Endothelial cell of umbilical vein (primary cell): ENCODE measurements at regions of chr4 and their contacts with region 1.

Region 1: DNA sequence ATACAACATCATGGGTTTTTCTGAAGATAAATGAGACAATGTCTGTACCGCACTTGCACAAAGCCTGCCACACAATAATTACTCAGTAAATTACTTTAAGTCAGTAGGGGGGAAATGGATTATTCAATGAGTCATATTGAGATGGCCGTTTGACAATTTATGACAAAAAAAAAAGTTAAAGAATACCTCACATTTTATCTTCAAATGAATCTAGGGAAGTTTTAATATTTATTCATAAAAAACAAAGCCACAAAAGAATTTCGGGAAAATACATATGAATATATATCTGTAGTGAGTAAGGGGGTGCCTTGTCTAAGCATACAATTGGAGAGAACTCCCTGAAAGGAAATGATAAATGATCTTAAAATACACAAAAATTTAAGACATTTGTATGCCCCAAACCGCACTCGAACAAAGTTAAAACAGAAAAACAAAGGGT is 197.0 kb upstream of the SLC7A11 start:
- DNase-seq: peak; percentile 60
- H3K4me3 ChIP-seq: peak overlapping the region in 1 of 3 experiments; percentile 17
- H3K27ac ChIP-seq: peak overlapping the region; percentile 70
- H3K4me1 ChIP-seq: peaks cover 19% of the 10 kb centered on the region
- H3K27me3 ChIP-seq: no peaks in the 10 kb centered on the region
- CTCF ChIP-seq: no peak
- POLR2A ChIP-seq: no peak

Region 2: DNA sequence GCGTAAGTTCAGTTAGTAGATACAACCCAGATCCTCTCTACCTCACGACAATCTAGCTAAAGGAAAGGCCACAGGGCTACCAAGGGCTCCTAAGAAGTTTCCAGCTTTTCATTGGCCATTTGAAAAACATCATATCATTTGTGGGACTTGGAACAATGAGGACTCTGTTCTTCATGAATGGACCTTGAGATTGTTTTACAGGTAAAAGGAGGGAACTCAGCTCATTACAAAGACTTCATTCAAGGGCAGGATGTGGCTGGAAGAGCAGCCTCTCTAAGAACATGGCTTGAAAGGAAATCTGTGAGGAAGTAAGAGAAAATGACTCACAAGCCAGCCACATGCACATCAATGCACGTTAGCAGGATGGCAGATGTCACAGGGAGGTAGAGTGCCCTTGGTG is 91.1 kb before region 1 on chr4:
- CTCF ChIA-PET with region 1: no interaction called
- POLR2A ChIA-PET with region 1: no interaction called
- dilution Hi-C with region 1: no loop called
- intact Hi-C with region 1: loop called (anchors 5 kb)
- DNase-seq: peak; percentile 23
- H3K4me3 ChIP-seq: no peak overlapping the region
- H3K27ac ChIP-seq: peak overlapping the region; percentile 12
- H3K4me1 ChIP-seq: peaks cover 12% of the 10 kb centered on the region
- H3K27me3 ChIP-seq: no peaks in the 10 kb centered on the region
- CTCF ChIP-seq: no peak
- POLR2A ChIP-seq: no peak

Region 3: DNA sequence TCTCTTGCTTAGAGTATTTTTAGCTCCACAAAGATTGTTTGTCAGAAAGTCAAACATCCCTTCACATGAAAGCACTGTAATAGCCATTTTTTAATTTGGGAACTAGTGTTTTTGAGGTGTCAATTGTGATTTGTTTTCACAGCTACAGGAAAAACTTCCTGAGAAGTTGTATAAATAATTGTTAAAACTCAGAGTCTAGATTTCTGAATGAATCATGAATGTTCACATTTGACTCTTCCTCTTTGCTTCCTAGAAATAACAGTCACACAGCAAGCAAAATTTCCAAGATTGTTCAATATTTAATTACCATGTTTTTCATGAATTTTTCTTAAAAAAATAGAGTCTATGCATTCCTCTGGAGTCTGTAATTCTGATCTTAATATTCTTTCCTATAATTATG is 40.1 kb before region 1 on chr4:
- CTCF ChIA-PET with region 1: no interaction called
- POLR2A ChIA-PET with region 1: no interaction called
- dilution Hi-C with region 1: no loop called
- intact Hi-C with region 1: loop called (anchors 1 kb)
- DNase-seq: peak; percentile 74
- H3K4me3 ChIP-seq: no peak overlapping the region
- H3K27ac ChIP-seq: peak overlapping the region; percentile 30
- H3K4me1 ChIP-seq: peaks cover 18% of the 10 kb centered on the region
- H3K27me3 ChIP-seq: no peaks in the 10 kb centered on the region
- CTCF ChIP-seq: no peak
- POLR2A ChIP-seq: no peak

Region 4: GRCh38 chr4:138562544-138562991 is 123.4 kb after region 1 on chr4:
- CTCF ChIA-PET with region 1: no interaction called
- POLR2A ChIA-PET with region 1: no interaction called
- dilution Hi-C with region 1: no loop called
- intact Hi-C with region 1: no loop called
- DNase-seq: peak; percentile 72
- H3K4me3 ChIP-seq: no peak overlapping the region
- H3K27ac ChIP-seq: peak overlapping the region; percentile 93
- H3K4me1 ChIP-seq: peaks cover 11% of the 10 kb centered on the region
- H3K27me3 ChIP-seq: no peaks in the 10 kb centered on the region
- CTCF ChIP-seq: no peak
- POLR2A ChIP-seq: no peak